GM12878 (cell line): ENCODE measurements at regions of chr12 and their contacts with region 1.

Region 1: DNA sequence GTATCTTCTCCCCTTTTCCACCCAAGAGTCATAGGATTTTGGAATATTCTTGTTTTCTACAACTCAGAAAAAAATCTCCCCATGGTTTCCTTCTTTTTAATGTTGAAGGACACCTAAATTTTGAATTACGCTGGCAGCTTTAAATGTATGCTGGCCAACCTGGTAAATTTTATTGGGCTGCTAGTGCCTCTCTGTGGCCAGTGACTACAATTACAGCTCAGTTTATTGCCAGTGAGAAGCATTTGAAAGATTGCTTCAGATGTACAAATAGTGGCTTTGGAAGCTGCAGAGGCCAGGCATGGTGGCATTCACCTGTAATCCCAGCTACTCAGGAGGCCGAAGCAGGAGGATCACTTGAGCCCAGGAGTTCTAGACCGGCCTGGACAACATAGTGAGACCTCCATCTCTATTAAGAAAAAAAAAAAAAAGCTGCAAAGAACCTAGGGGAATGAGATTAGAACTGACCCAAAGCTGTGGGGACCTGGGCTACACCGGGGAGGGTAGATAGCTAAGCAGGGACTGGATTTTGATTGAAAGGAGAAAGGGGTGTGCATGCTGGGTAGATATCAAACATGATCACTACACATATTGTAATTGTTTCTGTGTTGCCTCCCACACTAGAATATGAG is 7.6 kb upstream of the RAB21 start:
- DNase-seq: peak; percentile 45
- ATAC-seq: peak; percentile 95
- H3K4me3 ChIP-seq: no peak overlapping the region
- H3K27ac ChIP-seq: no peak overlapping the region
- H3K4me1 ChIP-seq: no peaks in the 10 kb centered on the region
- H3K27me3 ChIP-seq: no peaks in the 10 kb centered on the region; a peak in 1 of 4 replicates
- CTCF ChIP-seq: peak; percentile 67 to 85 (median 80)
- EP300 ChIP-seq: no peak
- POLR2A ChIP-seq: no peak
- RAD21 ChIP-seq: peak; percentile 97

Region 2: DNA sequence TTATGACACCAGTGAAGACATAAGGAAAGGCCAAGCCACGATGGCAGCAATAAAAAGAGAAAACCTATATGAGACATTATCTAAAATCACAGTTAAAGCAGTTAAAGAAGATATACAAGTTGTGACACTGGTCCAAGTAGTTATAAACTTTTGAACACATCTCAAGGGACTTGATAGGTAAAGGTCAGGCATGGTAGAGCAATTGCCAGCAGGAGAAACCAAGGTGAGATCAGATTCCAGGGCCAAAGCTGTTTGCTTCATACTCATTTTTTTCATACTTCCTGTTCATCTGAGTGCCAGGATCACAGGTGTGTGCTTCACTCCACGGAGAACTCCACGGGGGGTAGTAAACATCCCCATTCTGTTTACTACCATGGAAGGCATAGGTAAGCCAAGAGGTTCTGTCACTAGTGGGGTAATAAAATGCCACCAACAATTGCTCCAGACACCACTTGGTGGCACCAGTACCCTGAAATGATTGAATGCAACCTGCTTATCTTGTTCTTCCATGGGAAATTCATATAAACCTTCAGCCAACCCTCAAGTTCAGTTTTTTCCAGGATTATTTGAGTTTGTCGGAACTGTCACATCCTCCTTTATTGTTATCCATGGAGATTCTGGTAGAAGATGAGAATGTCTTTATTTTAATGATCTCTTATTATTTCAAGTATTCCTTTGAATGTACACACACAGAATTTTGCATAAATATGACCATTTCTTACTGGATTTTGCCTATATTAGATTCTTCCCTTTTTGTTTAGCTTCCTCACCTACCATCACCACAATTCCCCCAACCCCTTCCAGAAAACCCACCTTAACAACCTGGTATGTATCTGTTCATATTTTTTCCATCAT is 530.1 kb before region 1 on chr12:
- CTCF ChIA-PET with region 1: interaction called, 5 read pairs
- POLR2A ChIA-PET with region 1: no interaction called
- RAD21 ChIA-PET with region 1: no interaction called
- SMC1A ChIA-PET with region 1: no interaction called
- in situ Hi-C with region 1: no loop called
- intact Hi-C with region 1: loop called (anchors 5 kb)
- DNase-seq: no peak
- ATAC-seq: peak; percentile 69
- H3K4me3 ChIP-seq: no peak overlapping the region
- H3K27ac ChIP-seq: no peak overlapping the region
- H3K4me1 ChIP-seq: no peaks in the 10 kb centered on the region
- H3K27me3 ChIP-seq: no peaks in the 10 kb centered on the region
- CTCF ChIP-seq: peak; percentile 39 to 42 (median 41); a peak in 5 of 6 replicates
- EP300 ChIP-seq: no peak
- POLR2A ChIP-seq: no peak
- RAD21 ChIP-seq: peak; percentile 39; the same call in 1 of the 2 replicates

Region 3: GRCh38 chr12:71551529-71551928 is 195.6 kb before region 1 on chr12:
- CTCF ChIA-PET with region 1: interaction called, 11 read pairs
- POLR2A ChIA-PET with region 1: no interaction called
- RAD21 ChIA-PET with region 1: interaction called, 8 read pairs
- SMC1A ChIA-PET with region 1: interaction called, 4 read pairs
- in situ Hi-C with region 1: no loop called
- intact Hi-C with region 1: no loop called
- DNase-seq: no peak
- ATAC-seq: peak; percentile 34; the same call in 2 of the 3 replicates
- H3K4me3 ChIP-seq: no peak overlapping the region
- H3K27ac ChIP-seq: no peak overlapping the region
- H3K4me1 ChIP-seq: no peaks in the 10 kb centered on the region
- H3K27me3 ChIP-seq: no peaks in the 10 kb centered on the region
- CTCF ChIP-seq: peak; percentile 8 to 40 (median 10); a peak in 2 of 6 replicates
- EP300 ChIP-seq: no peak
- POLR2A ChIP-seq: no peak
- RAD21 ChIP-seq: no peak

Region 4: GRCh38 chr12:71636704-71637115 is 110.4 kb before region 1 on chr12:
- CTCF ChIA-PET with region 1: interaction called, 75 read pairs
- POLR2A ChIA-PET with region 1: interaction called, 7 read pairs
- RAD21 ChIA-PET with region 1: interaction called, 52 read pairs
- SMC1A ChIA-PET with region 1: interaction called, 95 read pairs
- in situ Hi-C with region 1: no loop called
- intact Hi-C with region 1: loop called (anchors 1 kb)
- DNase-seq: peak; percentile 12
- ATAC-seq: peak; percentile 81
- H3K4me3 ChIP-seq: no peak overlapping the region
- H3K27ac ChIP-seq: no peak overlapping the region
- H3K4me1 ChIP-seq: no peaks in the 10 kb centered on the region; the same call in 1 of the 2 replicates
- H3K27me3 ChIP-seq: no peaks in the 10 kb centered on the region
- CTCF ChIP-seq: peak; percentile 65 to 73 (median 71)
- EP300 ChIP-seq: no peak
- POLR2A ChIP-seq: no peak
- RAD21 ChIP-seq: peak; percentile 63

Region 5: GRCh38 chr12:71671816-71672215 is 75.3 kb before region 1 on chr12:
- CTCF ChIA-PET with region 1: interaction called, 8 read pairs
- POLR2A ChIA-PET with region 1: no interaction called
- RAD21 ChIA-PET with region 1: interaction called, 9 read pairs
- SMC1A ChIA-PET with region 1: interaction called, 14 read pairs
- in situ Hi-C with region 1: no loop called
- intact Hi-C with region 1: no loop called
- DNase-seq: no peak
- ATAC-seq: no peak
- H3K4me3 ChIP-seq: no peak overlapping the region
- H3K27ac ChIP-seq: no peak overlapping the region
- H3K4me1 ChIP-seq: no peaks in the 10 kb centered on the region
- H3K27me3 ChIP-seq: no peaks in the 10 kb centered on the region
- CTCF ChIP-seq: no peak
- EP300 ChIP-seq: no peak
- POLR2A ChIP-seq: no peak
- RAD21 ChIP-seq: no peak

Region 6: DNA sequence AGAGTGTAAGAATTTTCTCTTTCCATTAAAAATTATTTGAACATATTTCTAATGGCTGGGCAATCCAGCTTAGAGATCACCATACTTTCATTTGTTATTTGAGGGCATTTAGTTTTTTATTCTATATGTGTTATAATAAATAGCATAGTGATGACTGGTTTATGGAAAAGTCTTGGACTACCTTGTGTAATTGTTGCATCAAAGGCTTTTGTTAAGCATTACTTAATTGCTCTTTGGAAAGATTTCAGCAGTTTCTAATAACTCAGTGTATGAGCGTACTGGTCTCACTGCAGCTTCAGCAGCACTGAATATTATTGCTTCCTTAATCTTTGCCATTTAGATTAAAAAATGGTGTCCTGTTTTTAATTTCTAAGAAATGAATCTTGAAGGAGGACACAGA is 38.4 kb before region 1 on chr12:
- CTCF ChIA-PET with region 1: interaction called, 11 read pairs
- POLR2A ChIA-PET with region 1: no interaction called
- RAD21 ChIA-PET with region 1: interaction called, 7 read pairs
- SMC1A ChIA-PET with region 1: interaction called, 7 read pairs
- in situ Hi-C with region 1: no loop called
- intact Hi-C with region 1: no loop called
- DNase-seq: no peak
- ATAC-seq: no peak
- H3K4me3 ChIP-seq: no peak overlapping the region
- H3K27ac ChIP-seq: no peak overlapping the region
- H3K4me1 ChIP-seq: no peaks in the 10 kb centered on the region
- H3K27me3 ChIP-seq: no peaks in the 10 kb centered on the region
- CTCF ChIP-seq: no peak
- EP300 ChIP-seq: no peak
- POLR2A ChIP-seq: no peak
- RAD21 ChIP-seq: no peak

Region 7: DNA sequence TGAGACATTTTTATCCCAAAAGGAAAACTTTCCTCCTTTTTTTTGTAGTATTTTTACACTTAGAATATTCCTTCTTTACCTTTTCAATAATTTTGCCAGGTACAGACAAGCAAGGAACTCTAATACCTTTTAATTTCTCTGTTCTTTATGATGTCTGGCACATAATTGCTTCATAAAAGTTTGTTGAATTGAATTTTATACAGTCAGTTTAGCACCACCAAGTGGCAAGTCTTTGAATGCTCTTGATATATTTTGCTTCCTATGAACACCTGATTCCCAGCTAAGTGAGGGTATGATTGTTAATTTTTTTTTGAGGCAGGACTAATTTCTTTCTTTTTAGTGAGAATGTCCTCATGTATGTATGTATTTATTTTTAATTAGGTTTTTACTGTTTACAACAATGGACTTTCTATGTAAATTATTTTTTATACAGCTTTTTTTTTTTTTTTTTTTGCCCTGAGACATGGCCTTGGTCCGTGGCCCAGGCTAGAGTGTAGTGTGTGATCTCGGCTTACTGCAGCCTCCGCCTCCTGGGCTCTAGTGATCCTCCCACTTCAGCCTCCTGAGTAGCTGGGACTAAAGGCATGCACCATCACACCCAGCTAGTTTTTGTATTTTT is 99.3 kb after region 1 on chr12:
- CTCF ChIA-PET with region 1: interaction called, 7 read pairs
- POLR2A ChIA-PET with region 1: no interaction called
- RAD21 ChIA-PET with region 1: interaction called, 11 read pairs
- SMC1A ChIA-PET with region 1: interaction called, 8 read pairs
- in situ Hi-C with region 1: no loop called
- intact Hi-C with region 1: no loop called
- DNase-seq: no peak
- ATAC-seq: peak; percentile 60
- H3K4me3 ChIP-seq: no peak overlapping the region
- H3K27ac ChIP-seq: no peak overlapping the region
- H3K4me1 ChIP-seq: peaks cover 4% of the 10 kb centered on the region; the same call in 1 of the 2 replicates
- H3K27me3 ChIP-seq: no peaks in the 10 kb centered on the region
- CTCF ChIP-seq: peak; percentile 45 to 50 (median 47); a peak in 5 of 6 replicates
- EP300 ChIP-seq: no peak
- POLR2A ChIP-seq: no peak
- RAD21 ChIP-seq: peak; percentile 31; the same call in 1 of the 2 replicates

Region 8: DNA sequence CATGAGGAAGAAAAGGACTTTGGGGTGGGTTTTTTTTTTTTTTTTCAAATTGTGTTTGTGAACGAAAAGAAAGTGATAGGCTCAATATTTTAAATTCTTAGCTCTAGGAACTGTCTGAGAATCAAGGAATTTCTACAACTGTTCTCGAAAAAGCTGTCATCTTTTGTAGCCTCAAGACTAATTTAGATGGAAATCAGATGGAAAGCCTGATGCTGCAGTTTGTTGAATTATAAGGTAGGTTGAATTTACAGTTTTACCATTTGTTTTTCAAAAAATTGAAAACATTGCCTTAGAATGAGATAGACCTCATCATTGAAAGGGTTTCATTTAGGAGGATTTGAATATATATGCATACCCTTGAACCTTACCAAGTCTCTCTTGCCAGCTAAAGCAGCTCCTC is 415.8 kb after region 1 on chr12:
- CTCF ChIA-PET with region 1: no interaction called
- POLR2A ChIA-PET with region 1: no interaction called
- RAD21 ChIA-PET with region 1: no interaction called
- SMC1A ChIA-PET with region 1: no interaction called
- in situ Hi-C with region 1: no loop called
- intact Hi-C with region 1: no loop called
- DNase-seq: no peak
- ATAC-seq: no peak
- H3K4me3 ChIP-seq: no peak overlapping the region
- H3K27ac ChIP-seq: no peak overlapping the region
- H3K4me1 ChIP-seq: no peaks in the 10 kb centered on the region
- H3K27me3 ChIP-seq: no peaks in the 10 kb centered on the region; a peak in 1 of 4 replicates
- CTCF ChIP-seq: no peak
- EP300 ChIP-seq: no peak
- POLR2A ChIP-seq: no peak
- RAD21 ChIP-seq: no peak